Endothelial cell of umbilical vein (primary cell): ENCODE measurements at regions of chr3 and their contacts with region 1.

Region 1: DNA sequence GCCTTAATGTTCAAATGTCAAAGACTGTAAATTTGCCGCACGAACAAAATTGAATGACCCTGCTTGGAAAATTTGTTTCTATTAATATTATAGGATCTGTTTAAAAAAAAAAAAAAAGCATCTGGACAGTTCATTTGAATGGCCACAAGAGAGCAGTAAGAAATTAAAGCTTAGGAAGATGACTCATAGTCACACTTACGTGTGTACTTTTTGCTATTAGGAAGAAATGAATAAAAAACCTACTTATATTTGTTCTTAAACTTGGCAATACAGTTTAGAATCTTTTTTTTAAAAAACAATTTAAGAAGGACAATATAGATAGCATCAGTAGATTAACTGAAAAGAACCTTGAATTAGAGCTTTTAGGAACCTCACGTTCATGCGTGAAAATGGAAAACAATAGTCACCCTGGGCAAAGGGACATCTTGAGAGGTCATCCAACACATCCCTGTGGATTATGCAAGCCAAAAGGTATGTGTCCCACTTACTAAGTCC is 621.8 kb downstream of the MECOM start:
- DNase-seq: peak; percentile 87
- H3K4me3 ChIP-seq: no peak overlapping the region
- H3K27ac ChIP-seq: peak overlapping the region; percentile 48
- H3K4me1 ChIP-seq: peaks cover 27% of the 10 kb centered on the region
- H3K27me3 ChIP-seq: no peaks in the 10 kb centered on the region
- CTCF ChIP-seq: peak; percentile 23 to 29
- POLR2A ChIP-seq: no peak

Region 2: GRCh38 chr3:169026543-169027182 is 15.1 kb before region 1 on chr3:
- CTCF ChIA-PET with region 1: interaction called, 14 read pairs
- POLR2A ChIA-PET with region 1: no interaction called
- dilution Hi-C with region 1: no loop called
- intact Hi-C with region 1: loop called (anchors 1 kb)
- DNase-seq: peak; percentile 96
- H3K4me3 ChIP-seq: peak overlapping the region in 1 of 3 experiments; percentile 45
- H3K27ac ChIP-seq: peak overlapping the region; percentile 75
- H3K4me1 ChIP-seq: peaks cover 21% of the 10 kb centered on the region
- H3K27me3 ChIP-seq: no peaks in the 10 kb centered on the region
- CTCF ChIP-seq: no peak
- POLR2A ChIP-seq: peak; percentile 24

Region 3: DNA sequence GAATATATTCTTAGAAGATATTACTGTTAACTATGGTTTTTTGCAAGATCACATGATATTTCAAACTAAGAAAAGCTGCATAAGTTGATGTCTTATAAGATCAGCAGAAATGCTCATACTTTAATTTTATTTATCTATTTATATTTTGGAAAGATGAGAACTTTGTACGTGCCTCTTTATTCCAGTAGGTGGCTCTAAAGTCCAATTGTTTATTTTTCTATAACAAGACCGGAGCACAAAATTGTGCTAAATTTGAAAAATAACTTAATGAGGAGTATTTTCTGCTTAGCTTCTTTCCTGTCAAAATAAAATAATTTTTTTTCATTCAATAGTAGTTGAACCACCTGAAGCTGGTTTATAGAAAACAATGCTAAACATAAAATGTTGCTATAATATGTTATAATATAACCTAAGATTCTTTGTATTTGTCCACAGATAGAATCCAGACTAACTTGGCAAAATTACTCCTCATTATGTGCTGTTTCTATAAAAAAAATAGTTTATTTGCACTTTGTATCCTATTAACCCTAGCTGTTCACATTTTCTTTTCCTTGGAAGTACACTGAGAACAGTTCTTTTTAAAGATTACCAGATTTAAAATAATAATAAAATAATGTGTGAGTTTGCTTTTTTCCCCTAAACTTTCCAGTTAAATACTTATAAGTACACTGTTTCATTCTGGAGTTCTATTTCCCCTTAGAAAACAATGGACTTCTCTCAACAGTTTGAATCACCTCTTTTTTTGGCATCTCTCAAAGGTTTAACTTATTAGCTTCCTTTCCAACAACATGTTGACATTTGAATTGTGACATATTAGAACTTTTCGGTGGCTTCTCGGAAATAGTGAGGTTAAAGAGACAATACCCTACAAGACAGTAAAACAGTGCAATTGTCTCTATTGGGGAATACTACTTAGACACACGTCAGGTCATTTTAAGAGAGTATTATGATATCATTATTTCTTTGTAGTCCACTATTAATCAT is 91.7 kb after region 1 on chr3:
- CTCF ChIA-PET with region 1: interaction called, 15 read pairs
- POLR2A ChIA-PET with region 1: no interaction called
- dilution Hi-C with region 1: no loop called
- intact Hi-C with region 1: no loop called
- DNase-seq: peak; percentile 83
- H3K4me3 ChIP-seq: no peak overlapping the region
- H3K27ac ChIP-seq: peak overlapping the region; percentile 52
- H3K4me1 ChIP-seq: peaks cover 44% of the 10 kb centered on the region
- H3K27me3 ChIP-seq: no peaks in the 10 kb centered on the region
- CTCF ChIP-seq: peak in 1 of 2 donors; percentile 16
- POLR2A ChIP-seq: peak; percentile 17

Region 4: GRCh38 chr3:169305460-169305859 is 263.7 kb after region 1 on chr3:
- CTCF ChIA-PET with region 1: no interaction called
- POLR2A ChIA-PET with region 1: no interaction called
- dilution Hi-C with region 1: no loop called
- intact Hi-C with region 1: loop called (anchors 10 kb)
- DNase-seq: no peak
- H3K4me3 ChIP-seq: no peak overlapping the region
- H3K27ac ChIP-seq: no peak overlapping the region
- H3K4me1 ChIP-seq: peaks cover 20% of the 10 kb centered on the region
- H3K27me3 ChIP-seq: no peaks in the 10 kb centered on the region
- CTCF ChIP-seq: no peak
- POLR2A ChIP-seq: no peak

Region 5: DNA sequence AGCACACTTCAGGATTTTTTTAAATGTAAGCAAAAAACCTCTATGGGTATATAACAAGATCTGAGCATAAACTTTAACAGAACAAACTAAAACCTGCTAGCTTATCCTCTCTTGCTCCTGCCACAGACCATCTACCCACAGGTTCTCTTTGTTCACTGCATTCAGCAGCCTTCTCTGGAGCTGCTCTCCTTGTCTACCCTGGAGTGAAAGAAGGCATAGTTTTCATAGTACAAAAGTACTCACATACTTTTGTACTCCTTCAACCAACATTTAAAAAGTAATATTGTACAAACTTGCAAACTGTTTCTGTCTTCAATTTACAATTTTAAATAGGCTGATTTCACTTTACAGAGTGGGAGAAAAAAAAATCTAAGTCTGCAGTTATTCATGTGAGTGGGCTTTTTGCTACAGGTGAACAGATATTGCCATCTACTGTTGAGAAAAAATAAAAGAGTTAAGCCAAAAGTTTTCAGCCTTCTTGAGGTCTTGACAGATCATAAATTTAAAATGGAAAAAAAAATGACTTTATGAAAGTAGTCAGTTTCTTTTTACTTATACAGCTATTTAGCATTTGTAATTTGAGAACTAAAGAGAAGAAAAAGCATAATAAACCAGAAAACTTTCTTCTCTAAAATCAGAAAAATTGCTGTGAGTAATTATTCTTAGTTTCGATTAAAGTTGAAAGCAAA is 702.8 kb after region 1 on chr3:
- CTCF ChIA-PET with region 1: interaction called, 5 read pairs
- POLR2A ChIA-PET with region 1: no interaction called
- dilution Hi-C with region 1: no loop called
- intact Hi-C with region 1: loop called (anchors 2 kb)
- DNase-seq: peak; percentile 74
- H3K4me3 ChIP-seq: no peak overlapping the region
- H3K27ac ChIP-seq: no peak overlapping the region
- H3K4me1 ChIP-seq: no peaks in the 10 kb centered on the region
- H3K27me3 ChIP-seq: peaks cover 2 to 13% of the 10 kb centered on the region in 2 experiments
- CTCF ChIP-seq: peak in 1 of 2 donors; percentile 21
- POLR2A ChIP-seq: no peak